PC-9 (cell line): ENCODE measurements at regions of chr12 and their contacts with region 1.

Region 1: DNA sequence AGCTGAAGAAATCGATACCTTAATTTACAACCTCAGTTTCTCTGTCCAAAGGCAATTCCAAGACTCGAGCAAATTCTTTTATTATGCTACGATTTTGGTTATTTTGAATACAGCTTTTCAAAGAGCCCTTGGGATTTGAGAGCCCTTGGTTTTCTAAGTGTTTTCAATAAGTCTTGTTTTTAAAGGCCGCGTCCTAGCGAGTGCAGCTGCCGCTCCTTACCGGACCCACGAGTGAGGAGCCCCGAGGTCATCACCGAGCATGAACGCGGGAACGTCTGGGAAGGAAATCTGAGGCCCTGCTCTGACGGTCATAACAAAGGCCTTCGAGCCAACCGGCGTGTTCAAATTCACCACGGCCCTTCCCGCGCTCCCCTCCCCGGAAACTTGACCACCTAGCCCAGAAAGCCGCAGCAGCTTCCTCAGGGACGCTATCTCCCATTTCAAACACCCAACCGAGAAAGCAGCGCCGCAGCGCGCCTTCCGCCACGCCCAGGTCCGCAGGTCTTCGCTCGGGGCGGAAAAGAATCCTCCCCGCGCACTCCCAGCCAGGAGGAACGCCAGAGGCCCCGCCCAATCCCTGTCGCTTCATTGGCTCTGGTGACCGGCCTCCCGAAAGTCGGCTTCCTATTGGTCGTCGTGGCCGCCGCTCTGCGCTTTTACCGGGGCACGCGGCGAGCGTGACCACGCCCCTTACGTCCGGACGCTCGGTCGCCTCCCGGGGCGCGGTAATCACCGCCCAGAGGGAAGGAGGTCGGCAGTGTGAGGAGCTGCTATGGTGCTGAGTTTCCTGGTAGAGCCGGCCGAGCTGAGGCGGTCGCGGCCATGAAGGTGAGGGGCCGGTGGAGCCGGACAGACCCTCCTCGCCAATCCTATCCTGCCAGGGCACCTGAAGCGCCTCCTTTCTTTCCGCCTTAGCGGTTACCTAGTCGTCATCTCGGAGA is at the start of gene RNF34:
- DNase-seq: peak; percentile 93 to 98
- H3K4me3 ChIP-seq: peak within 1 kb of the TSS; percentile 84
- H3K27ac ChIP-seq: peak within 1 kb of the TSS; percentile 49
- H3K4me1 ChIP-seq: peaks cover 24% of the 10 kb centered on the region
- H3K27me3 ChIP-seq: no peaks in the 10 kb centered on the region
- CTCF ChIP-seq: no peak
- total RNA-seq, gene RNF34: 37.2 and 43.7 TPM in 2 replicates

Region 2: DNA sequence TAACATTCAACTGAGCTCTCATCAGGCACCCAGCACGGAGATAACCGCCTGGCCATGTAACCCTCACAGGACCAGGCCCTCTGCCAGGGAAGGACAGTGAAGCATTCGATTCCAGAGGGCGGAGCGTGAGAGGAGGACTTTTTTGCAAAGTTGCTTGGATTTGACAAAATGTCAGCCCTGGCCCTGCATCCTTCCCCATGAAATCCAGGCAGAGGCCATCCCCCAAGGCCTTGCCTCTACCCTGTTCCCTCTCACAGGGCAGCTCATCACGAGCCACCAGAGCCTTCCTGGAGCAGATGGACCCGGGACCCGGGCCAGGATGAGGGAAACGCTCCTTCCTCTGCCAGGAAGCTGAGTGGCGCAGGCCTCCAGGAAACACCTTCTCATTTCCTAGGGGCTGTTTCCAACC is 120.2 kb before region 1 on chr12:
- CTCF ChIA-PET with region 1: no interaction called
- POLR2A ChIA-PET with region 1: interaction called, 13 read pairs
- intact Hi-C with region 1: no loop called
- DNase-seq: no peak
- H3K4me3 ChIP-seq: no peak overlapping the region
- H3K27ac ChIP-seq: no peak overlapping the region
- H3K4me1 ChIP-seq: peaks cover 12% of the 10 kb centered on the region
- H3K27me3 ChIP-seq: no peaks in the 10 kb centered on the region
- CTCF ChIP-seq: no peak